MCF 10A (cell line): ENCODE measurements at regions of chr16 and their contacts with region 1.

Region 1: GRCh38 chr16:58000706-58001676 is at the start of gene USB1:
- DNase-seq: peak; percentile 82
- H3K4me3 Mint-ChIP-seq: peak within 1 kb of the TSS; percentile 86
- H3K27ac Mint-ChIP-seq: peak within 1 kb of the TSS; percentile 29
- H3K4me1 Mint-ChIP-seq: peaks cover 28% of the 10 kb centered on the region
- H3K27me3 Mint-ChIP-seq: no peaks in the 10 kb centered on the region
- CTCF ChIP-seq: peak; percentile 82
- total RNA-seq, gene USB1: 49.2 and 57.1 TPM in 2 replicates

Region 2: DNA sequence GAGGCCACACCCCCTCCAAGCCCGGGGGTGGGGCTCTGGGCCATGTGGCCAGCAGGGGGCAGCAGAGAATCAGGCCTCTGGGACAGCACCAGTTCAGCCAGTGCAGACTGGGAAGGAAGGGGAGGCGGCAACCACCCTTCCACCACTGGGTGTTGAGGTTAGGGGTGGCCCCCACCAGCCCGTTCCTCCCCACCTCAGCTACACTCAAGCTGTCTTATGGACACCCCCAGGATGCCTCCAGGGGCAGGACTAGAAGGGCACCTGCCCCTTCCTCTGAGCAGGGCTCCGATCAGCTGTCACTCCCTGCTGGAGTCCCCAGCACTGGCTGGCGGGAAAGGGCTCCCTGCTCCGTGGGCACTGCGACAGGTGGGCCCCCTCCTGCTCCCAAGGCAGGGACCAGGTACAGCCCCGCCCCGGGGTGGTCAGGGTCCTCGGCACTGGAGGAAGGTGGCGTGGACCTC is 243.6 kb before region 1 on chr16:
- CTCF ChIA-PET with region 1: interaction called, 4 read pairs
- POLR2A ChIA-PET with region 1: no interaction called
- intact Hi-C with region 1: loop called (anchors 1 kb)
- DNase-seq: peak; percentile 85
- H3K4me3 Mint-ChIP-seq: no peak overlapping the region
- H3K27ac Mint-ChIP-seq: no peak overlapping the region
- H3K4me1 Mint-ChIP-seq: no peaks in the 10 kb centered on the region
- H3K27me3 Mint-ChIP-seq: no peaks in the 10 kb centered on the region
- CTCF ChIP-seq: peak; percentile 87

Region 3: GRCh38 chr16:57802341-57803133 is 198.5 kb before region 1 on chr16 and contains the start of gene KIFC3:
- CTCF ChIA-PET with region 1: interaction called, 3 read pairs
- POLR2A ChIA-PET with region 1: no interaction called
- intact Hi-C with region 1: loop called (anchors 2 kb)
- DNase-seq: peak; percentile 67
- H3K4me3 Mint-ChIP-seq: peak within 1 kb of the TSS; percentile 76
- H3K27ac Mint-ChIP-seq: peak within 1 kb of the TSS; percentile 97
- H3K4me1 Mint-ChIP-seq: peaks cover 55% of the 10 kb centered on the region
- H3K27me3 Mint-ChIP-seq: no peaks in the 10 kb centered on the region
- CTCF ChIP-seq: peak; percentile 15
- total RNA-seq, gene KIFC3: 97.1 and 120 TPM in 2 replicates

Region 4: GRCh38 chr16:57899771-57900661 is 101.0 kb before region 1 on chr16:
- CTCF ChIA-PET with region 1: interaction called, 88 read pairs
- POLR2A ChIA-PET with region 1: interaction called, 17 read pairs
- intact Hi-C with region 1: loop called (anchors 1 kb)
- DNase-seq: peak; percentile 73
- H3K4me3 Mint-ChIP-seq: no peak overlapping the region
- H3K27ac Mint-ChIP-seq: no peak overlapping the region
- H3K4me1 Mint-ChIP-seq: peaks cover 6% of the 10 kb centered on the region
- H3K27me3 Mint-ChIP-seq: no peaks in the 10 kb centered on the region
- CTCF ChIP-seq: peak; percentile 94

Region 5: DNA sequence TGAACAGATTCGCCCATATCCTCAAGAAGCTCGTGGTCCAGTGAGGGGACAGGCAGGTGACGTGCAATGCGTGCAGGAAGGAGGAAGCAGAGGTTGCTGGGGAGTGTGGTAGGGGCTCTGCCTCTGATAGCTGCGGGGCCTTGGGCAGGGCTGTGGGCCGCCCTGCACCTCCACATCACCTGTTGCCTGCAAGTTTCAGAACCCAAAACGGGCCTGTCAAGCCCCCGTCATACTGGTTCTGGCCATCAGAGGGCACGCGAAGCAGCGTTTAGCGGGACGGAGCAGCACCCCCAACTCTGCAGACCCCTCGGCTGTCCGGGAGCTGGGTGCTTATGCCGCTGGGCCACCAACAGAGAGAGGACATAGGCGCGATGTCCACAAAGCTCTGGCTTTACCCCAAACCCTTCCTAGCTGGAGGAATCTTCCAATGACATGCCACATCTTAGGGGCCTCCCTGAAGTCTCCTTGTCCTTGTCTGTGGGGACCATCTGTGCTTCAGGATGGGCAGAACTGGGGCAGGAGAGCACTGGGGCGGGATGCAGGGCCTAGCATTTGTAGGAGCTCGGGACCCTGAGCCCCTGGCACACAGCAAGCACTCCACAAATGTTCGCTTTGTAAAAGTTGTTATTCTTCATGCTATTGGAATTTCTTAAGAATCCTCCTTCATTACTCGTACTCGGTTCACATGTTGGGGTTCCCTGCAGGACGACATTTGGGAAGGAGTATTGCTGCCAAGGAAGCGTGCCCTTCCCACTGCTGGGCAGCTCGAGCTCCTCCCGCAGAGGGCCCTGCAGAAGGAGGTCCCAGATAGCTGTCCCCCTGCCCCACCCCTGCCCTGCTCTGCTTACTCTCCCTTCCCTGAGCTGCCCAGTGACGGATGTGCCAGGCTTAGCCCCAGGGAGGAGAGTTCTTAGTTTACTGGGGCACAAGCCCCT is 94.3 kb before region 1 on chr16:
- CTCF ChIA-PET with region 1: interaction called, 88 read pairs
- POLR2A ChIA-PET with region 1: interaction called, 13 read pairs
- intact Hi-C with region 1: no loop called
- DNase-seq: no peak
- H3K4me3 Mint-ChIP-seq: no peak overlapping the region
- H3K27ac Mint-ChIP-seq: no peak overlapping the region
- H3K4me1 Mint-ChIP-seq: peaks cover 9% of the 10 kb centered on the region
- H3K27me3 Mint-ChIP-seq: no peaks in the 10 kb centered on the region
- CTCF ChIP-seq: peak; percentile 76